HCT116 (cell line): ENCODE measurements at regions of chrX and their contacts with region 1.

Region 1: GRCh38 chrX:37905436-37906147 is 58.2 kb upstream of the DYNLT3 start:
- DNase-seq: no peak
- ATAC-seq: peak; percentile 90
- H3K4me3 ChIP-seq: peak overlapping the region; percentile 16 to 38
- H3K27ac ChIP-seq: no peak overlapping the region
- H3K4me1 ChIP-seq: peaks cover 2 to 16% of the 10 kb centered on the region in 2 experiments; a peak in 2 of 4 replicates
- H3K27me3 ChIP-seq: no peaks in the 10 kb centered on the region
- CTCF ChIP-seq: peak in 1 of 3 experiments; percentile 23; a peak in 3 of 6 replicates
- POLR2A ChIP-seq: no peak
- RAD21 ChIP-seq: peak; percentile 51

Region 2: GRCh38 chrX:37876716-37877115 is 28.9 kb before region 1 on chrX:
- CTCF ChIA-PET with region 1: no interaction called
- POLR2A ChIA-PET with region 1: no interaction called
- RAD21 ChIA-PET with region 1: interaction called in 1 of 2 experiments, 11 read pairs
- intact Hi-C with region 1: no loop called
- DNase-seq: no peak
- ATAC-seq: no peak
- H3K4me3 ChIP-seq: no peak overlapping the region
- H3K27ac ChIP-seq: no peak overlapping the region
- H3K4me1 ChIP-seq: peaks cover 0 to 7% of the 10 kb centered on the region in 2 experiments; a peak in 2 of 4 replicates
- H3K27me3 ChIP-seq: no peaks in the 10 kb centered on the region
- CTCF ChIP-seq: no peak
- POLR2A ChIP-seq: no peak
- RAD21 ChIP-seq: no peak